ENCODE measurements at regions of chr5 and their contacts with region 1.

Region 1: GRCh38 chr5:141878711-141879425 is 658 bp upstream of the PCDH1 start:
- DNase-seq: peak; percentile 70
- ATAC-seq: peak; percentile 86
- H3K4me3 Mint-ChIP-seq: peak overlapping the region; percentile 76
- H3K27ac Mint-ChIP-seq: peak overlapping the region; percentile 43
- H3K4me1 Mint-ChIP-seq: peaks cover 34% of the 10 kb centered on the region
- H3K27me3 Mint-ChIP-seq: peaks cover 71% of the 10 kb centered on the region
- CTCF ChIP-seq: peak; percentile 87

Region 2: DNA sequence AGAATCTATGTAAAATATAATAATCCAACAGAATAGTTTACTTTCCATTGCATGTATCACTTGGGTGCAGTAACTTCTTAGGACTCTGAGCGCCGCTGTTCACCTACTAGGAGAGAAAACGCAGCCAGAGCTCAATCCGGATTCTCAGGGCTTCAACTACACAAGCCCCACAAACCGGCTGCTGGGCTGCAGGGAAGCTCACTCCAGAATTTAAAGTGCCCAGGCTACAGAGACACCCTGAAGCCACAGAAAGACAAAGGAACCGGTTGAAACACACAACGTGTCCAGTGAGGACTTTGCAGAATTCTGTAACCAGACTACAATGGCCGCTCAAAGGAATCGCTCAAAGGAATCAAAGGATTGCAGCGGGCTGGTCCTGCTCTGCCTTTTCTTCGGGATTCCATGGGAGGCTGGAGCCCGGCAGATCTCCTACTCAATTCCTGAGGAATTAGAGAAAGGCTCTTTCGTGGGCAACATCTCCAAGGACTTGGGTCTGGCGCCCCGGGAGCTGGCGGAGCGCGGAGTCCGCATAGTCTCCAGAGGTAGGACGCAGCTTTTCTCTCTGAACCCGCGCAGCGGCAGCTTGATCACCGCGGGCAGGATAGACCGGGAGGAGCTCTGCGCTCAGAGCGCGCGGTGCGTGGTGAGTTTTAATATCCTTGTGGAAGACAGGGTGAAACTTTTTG is 465.9 kb before region 1 on chr5 and contains the start of gene PCDHGA10:
- CTCF ChIA-PET with region 1: no interaction called
- POLR2A ChIA-PET with region 1: no interaction called
- intact Hi-C with region 1: loop called (anchors 10 kb)
- DNase-seq: no peak
- ATAC-seq: peak; percentile 66
- H3K4me3 Mint-ChIP-seq: peak within 1 kb of the TSS; percentile 86
- H3K27ac Mint-ChIP-seq: peak within 1 kb of the TSS; percentile 41
- H3K4me1 Mint-ChIP-seq: peaks cover 21% of the 10 kb centered on the region
- H3K27me3 Mint-ChIP-seq: peaks cover 52% of the 10 kb centered on the region
- CTCF ChIP-seq: no peak
- total RNA-seq, gene PCDHGA10: 1.2 and 1.3 TPM in 2 replicates

Region 3: GRCh38 chr5:141664732-141665461 is 214.0 kb before region 1 on chr5:
- CTCF ChIA-PET with region 1: interaction called, 21 read pairs
- POLR2A ChIA-PET with region 1: interaction called, 3 read pairs
- intact Hi-C with region 1: loop called (anchors 1 kb)
- DNase-seq: peak; percentile 75
- ATAC-seq: peak; percentile 96
- H3K4me3 Mint-ChIP-seq: no peak overlapping the region
- H3K27ac Mint-ChIP-seq: no peak overlapping the region
- H3K4me1 Mint-ChIP-seq: peaks cover 4% of the 10 kb centered on the region
- H3K27me3 Mint-ChIP-seq: peaks cover 4% of the 10 kb centered on the region
- CTCF ChIP-seq: peak; percentile 93

Region 4: DNA sequence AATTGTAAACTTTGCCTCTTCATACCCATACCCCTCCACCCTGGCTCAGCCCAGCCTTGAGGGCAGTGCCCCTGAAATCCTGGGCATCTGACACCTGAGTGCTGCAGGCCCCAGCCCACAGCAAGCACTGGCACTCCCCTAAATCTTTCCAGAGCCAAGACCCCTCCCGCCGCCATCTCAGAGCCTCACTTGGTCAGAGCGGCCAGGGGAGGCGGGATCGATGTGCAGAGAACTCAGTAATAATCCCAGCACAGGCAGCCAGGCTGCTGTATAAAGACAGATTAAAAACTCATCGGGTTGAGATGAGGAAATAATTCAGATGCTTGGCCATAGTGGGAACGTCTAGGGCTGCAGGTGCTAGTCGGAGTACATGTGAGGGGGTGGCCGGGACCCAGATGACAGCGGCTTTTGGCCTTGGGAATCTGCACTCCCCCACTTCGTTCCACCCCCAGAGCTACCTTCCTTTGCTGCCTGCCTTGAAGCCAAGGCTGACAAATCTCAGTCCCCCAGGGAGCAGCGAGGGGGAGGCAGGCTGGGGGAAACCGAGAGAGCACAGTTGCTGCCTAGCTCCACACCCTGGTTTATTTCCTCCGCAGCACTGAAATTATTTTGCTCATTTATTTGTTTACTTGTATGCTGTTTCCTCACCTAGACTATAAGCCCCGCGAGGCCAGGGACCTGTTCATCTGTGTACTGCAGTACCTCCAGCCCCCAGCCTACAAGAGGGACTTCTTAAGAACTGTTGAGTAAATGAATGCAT is 177.3 kb before region 1 on chr5:
- CTCF ChIA-PET with region 1: interaction called, 29 read pairs
- POLR2A ChIA-PET with region 1: interaction called, 3 read pairs
- intact Hi-C with region 1: loop called (anchors 1 kb)
- DNase-seq: peak; percentile 26
- ATAC-seq: peak; percentile 73
- H3K4me3 Mint-ChIP-seq: no peak overlapping the region
- H3K27ac Mint-ChIP-seq: no peak overlapping the region
- H3K4me1 Mint-ChIP-seq: peaks cover 20% of the 10 kb centered on the region
- H3K27me3 Mint-ChIP-seq: peaks cover 57% of the 10 kb centered on the region
- CTCF ChIP-seq: no peak

Region 5: GRCh38 chr5:141811287-141812155 is 67.3 kb before region 1 on chr5:
- CTCF ChIA-PET with region 1: interaction called, 4 read pairs
- POLR2A ChIA-PET with region 1: no interaction called
- intact Hi-C with region 1: loop called (anchors 5 kb)
- DNase-seq: no peak
- ATAC-seq: peak; percentile 45
- H3K4me3 Mint-ChIP-seq: no peak overlapping the region
- H3K27ac Mint-ChIP-seq: no peak overlapping the region
- H3K4me1 Mint-ChIP-seq: no peaks in the 10 kb centered on the region
- H3K27me3 Mint-ChIP-seq: peaks cover 57% of the 10 kb centered on the region
- CTCF ChIP-seq: no peak

Region 6: DNA sequence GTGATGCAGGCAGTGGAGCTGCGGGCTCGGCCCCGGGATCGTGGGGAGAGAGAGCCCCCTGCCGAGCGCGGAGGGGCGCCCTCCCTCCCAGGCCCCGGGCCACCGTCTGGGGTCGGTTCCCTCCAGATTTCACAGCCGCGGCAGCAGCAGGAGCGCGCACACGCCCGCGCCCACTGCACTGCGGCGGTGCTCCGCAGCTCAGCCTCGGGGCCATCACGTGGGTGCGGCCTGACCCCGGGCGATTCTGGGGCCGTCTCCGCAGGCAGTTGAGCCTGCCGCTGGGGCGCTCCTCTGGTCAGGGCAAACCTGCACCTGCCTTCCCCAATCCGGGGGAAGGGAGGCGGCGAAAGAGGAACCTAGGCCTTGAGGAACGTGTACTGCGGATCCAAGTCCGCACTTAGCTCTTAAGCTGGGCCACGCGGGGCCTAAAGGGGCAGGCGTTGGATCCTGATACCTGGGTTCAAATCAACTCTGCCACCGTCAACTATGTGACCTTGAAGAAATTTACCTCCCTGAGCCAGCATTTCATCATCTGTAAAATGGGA is 35.4 kb after region 1 on chr5:
- CTCF ChIA-PET with region 1: interaction called, 6 read pairs
- POLR2A ChIA-PET with region 1: no interaction called
- intact Hi-C with region 1: loop called (anchors 2 kb)
- DNase-seq: peak; percentile 47
- ATAC-seq: peak; percentile 78
- H3K4me3 Mint-ChIP-seq: peak overlapping the region; percentile 72
- H3K27ac Mint-ChIP-seq: no peak overlapping the region
- H3K4me1 Mint-ChIP-seq: peaks cover 40% of the 10 kb centered on the region
- H3K27me3 Mint-ChIP-seq: peaks cover 8% of the 10 kb centered on the region
- CTCF ChIP-seq: no peak

Region 7: GRCh38 chr5:142012792-142013388 is 134.0 kb after region 1 on chr5 and contains the start of gene GNPDA1:
- CTCF ChIA-PET with region 1: no interaction called
- POLR2A ChIA-PET with region 1: no interaction called
- intact Hi-C with region 1: loop called (anchors 2 kb)
- DNase-seq: peak; percentile 76
- ATAC-seq: peak; percentile 83
- H3K4me3 Mint-ChIP-seq: peak within 1 kb of the TSS; percentile 88
- H3K27ac Mint-ChIP-seq: peak within 1 kb of the TSS; percentile 86
- H3K4me1 Mint-ChIP-seq: peaks cover 44% of the 10 kb centered on the region
- H3K27me3 Mint-ChIP-seq: no peaks in the 10 kb centered on the region
- CTCF ChIP-seq: no peak
- total RNA-seq, gene GNPDA1: 14.2 and 15.0 TPM in 2 replicates

Region 8: GRCh38 chr5:142783601-142784341 is 904.9 kb after region 1 on chr5:
- CTCF ChIA-PET with region 1: no interaction called
- POLR2A ChIA-PET with region 1: no interaction called
- intact Hi-C with region 1: no loop called
- DNase-seq: no peak
- ATAC-seq: no peak
- H3K4me3 Mint-ChIP-seq: no peak overlapping the region
- H3K27ac Mint-ChIP-seq: no peak overlapping the region
- H3K4me1 Mint-ChIP-seq: peaks cover 17% of the 10 kb centered on the region
- H3K27me3 Mint-ChIP-seq: no peaks in the 10 kb centered on the region
- CTCF ChIP-seq: no peak

Region 9: GRCh38 chr5:143435210-143435657 is 1556.4 kb after region 1 on chr5:
- CTCF ChIA-PET with region 1: no interaction called
- POLR2A ChIA-PET with region 1: no interaction called
- intact Hi-C with region 1: no loop called
- DNase-seq: peak; percentile 31
- ATAC-seq: peak; percentile 82
- H3K4me3 Mint-ChIP-seq: peak overlapping the region; percentile 89
- H3K27ac Mint-ChIP-seq: peak overlapping the region; percentile 99
- H3K4me1 Mint-ChIP-seq: peaks cover 69% of the 10 kb centered on the region
- H3K27me3 Mint-ChIP-seq: no peaks in the 10 kb centered on the region
- CTCF ChIP-seq: no peak

Measured in activated B cell treated with CpG ODN at 0.5 μM for 24 hours (primary cell).